ENCODE measurements at regions of chr19 and their contacts with region 1.

Region 1: DNA sequence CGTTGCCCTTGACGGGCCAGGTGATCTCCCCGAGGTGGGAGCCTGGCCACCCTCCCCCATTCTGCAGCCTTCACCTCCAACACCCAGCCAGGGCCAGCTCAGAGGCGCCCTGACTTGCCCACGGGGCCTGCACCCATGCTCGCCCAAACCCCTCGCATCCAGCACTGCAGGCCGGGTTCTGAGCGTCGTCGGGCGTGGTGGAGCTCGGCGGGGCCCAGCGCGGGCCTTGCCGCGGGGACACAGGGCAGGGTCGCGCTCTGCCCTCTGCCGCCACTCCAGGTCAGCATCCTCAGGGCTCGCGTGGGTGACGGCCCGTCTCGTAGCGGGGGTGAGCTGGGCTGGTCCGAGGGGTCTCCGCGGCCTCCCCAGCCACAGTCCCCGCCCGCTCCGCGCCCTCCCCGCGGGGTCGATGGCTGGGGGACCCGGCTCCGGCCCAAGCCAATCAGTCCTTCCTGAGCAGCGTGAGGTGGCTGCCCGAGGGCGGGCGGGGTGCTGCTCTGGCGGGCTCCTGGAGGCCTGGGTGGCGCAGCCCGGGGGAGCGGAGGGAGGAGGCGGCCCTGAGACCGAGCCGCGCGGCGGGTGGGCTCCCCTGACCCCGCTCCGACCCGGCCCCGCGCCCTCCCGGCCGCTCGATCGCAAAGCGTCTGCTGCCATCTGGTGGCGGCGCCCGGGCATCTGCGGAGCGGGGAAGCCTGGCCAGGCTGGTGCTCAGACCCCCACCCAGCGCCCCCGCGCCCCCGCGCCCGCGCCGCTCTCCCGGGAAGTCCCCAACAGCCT is 61.4 kb downstream of the CCNE1 start:
- DNase-seq: no peak
- ATAC-seq: peak; percentile 87
- H3K4me3 ChIP-seq: peak overlapping the region; percentile 20; the same call in 1 of the 2 replicates
- H3K27ac ChIP-seq: no peak overlapping the region
- H3K4me1 ChIP-seq: peaks cover 1% of the 10 kb centered on the region; the same call in 1 of the 2 replicates
- H3K27me3 ChIP-seq: peaks cover 3% of the 10 kb centered on the region; the same call in 1 of the 2 replicates
- CTCF ChIP-seq: peak; percentile 65
- POLR2A ChIP-seq: no peak
- RAD21 ChIP-seq: peak; percentile 67

Region 2: GRCh38 chr19:29735800-29736199 is 137.4 kb before region 1 on chr19:
- CTCF ChIA-PET with region 1: interaction called, 6 read pairs
- POLR2A ChIA-PET with region 1: no interaction called
- dilution Hi-C with region 1: no loop called
- in situ Hi-C with region 1: no loop called
- intact Hi-C with region 1: loop called (anchors 1 kb)
- DNase-seq: no peak
- ATAC-seq: no peak
- H3K4me3 ChIP-seq: no peak overlapping the region
- H3K27ac ChIP-seq: no peak overlapping the region
- H3K4me1 ChIP-seq: no peaks in the 10 kb centered on the region
- H3K27me3 ChIP-seq: peaks cover 14% of the 10 kb centered on the region
- CTCF ChIP-seq: no peak
- POLR2A ChIP-seq: no peak
- RAD21 ChIP-seq: no peak

Region 3: GRCh38 chr19:29760752-29761502 is 112.3 kb before region 1 on chr19:
- CTCF ChIA-PET with region 1: interaction called, 4 read pairs
- POLR2A ChIA-PET with region 1: no interaction called
- dilution Hi-C with region 1: no loop called
- in situ Hi-C with region 1: no loop called
- intact Hi-C with region 1: loop called (anchors 1 kb)
- DNase-seq: no peak
- ATAC-seq: no peak
- H3K4me3 ChIP-seq: no peak overlapping the region
- H3K27ac ChIP-seq: no peak overlapping the region
- H3K4me1 ChIP-seq: no peaks in the 10 kb centered on the region
- H3K27me3 ChIP-seq: 0 out of 2 replicates have a peak, but pooled peaks cover 2% of the 10 kb centered on the region
- CTCF ChIP-seq: no peak
- POLR2A ChIP-seq: no peak
- RAD21 ChIP-seq: no peak

Region 4: GRCh38 chr19:29771708-29772414 is 101.4 kb before region 1 on chr19:
- CTCF ChIA-PET with region 1: interaction called, 4 read pairs
- POLR2A ChIA-PET with region 1: no interaction called
- dilution Hi-C with region 1: no loop called
- in situ Hi-C with region 1: loop called (anchors 5 kb)
- intact Hi-C with region 1: loop called (anchors 1 kb)
- DNase-seq: peak; percentile 37
- ATAC-seq: peak; percentile 94
- H3K4me3 ChIP-seq: no peak overlapping the region
- H3K27ac ChIP-seq: no peak overlapping the region
- H3K4me1 ChIP-seq: no peaks in the 10 kb centered on the region; the same call in 1 of the 2 replicates
- H3K27me3 ChIP-seq: peaks cover 2% of the 10 kb centered on the region; the same call in 1 of the 2 replicates
- CTCF ChIP-seq: peak; percentile 70
- POLR2A ChIP-seq: no peak
- RAD21 ChIP-seq: peak; percentile 71

Measured in IMR-90 (cell line).